CD8-positive, alpha-beta memory T cell (primary cell): ENCODE measurements at regions of chr1 and their contacts with region 1.

Region 1: DNA sequence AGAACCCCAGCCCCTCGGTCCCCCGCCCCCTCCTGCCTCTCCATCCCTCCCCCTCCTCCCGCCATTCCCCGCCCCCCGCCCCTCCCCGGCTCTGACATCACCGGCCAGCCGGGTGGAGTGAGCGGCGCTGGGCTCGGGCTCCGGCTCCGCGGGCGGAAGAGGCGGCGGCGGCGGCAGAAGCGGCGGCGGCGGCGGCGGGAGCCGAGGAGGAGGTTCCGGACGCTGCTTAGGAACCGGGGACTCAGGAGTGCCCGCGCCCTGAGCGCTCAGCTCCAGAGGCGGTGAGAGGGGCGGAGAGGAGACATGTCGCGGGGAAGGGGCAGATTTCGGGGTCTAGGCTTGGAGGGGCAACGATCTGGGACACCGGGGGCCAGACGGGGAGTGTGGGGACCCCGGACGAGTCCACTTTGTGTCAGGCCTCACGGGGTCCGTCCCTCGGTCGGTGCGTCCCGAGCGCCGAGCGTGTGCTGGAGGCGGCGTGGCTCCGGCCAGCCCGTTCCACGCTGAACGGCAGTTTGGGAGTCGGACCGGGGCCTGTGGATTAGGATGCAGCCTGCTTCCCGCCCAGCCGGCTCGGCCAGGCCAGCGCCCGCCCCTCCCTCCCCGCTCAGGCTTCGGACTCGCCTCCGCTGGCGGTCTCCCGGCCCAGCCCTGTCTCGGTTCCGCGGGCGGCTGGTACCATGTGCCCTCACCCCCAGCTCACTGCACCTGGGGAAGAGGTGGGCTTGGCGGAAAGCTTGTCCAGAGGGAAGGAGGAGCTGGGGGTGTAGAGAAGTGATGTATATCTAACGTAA is at the start of gene PEA15:
- DNase-seq: peak; percentile 56 to 76 (median 58)
- H3K4me3 ChIP-seq: peak within 1 kb of the TSS; percentile 71
- H3K4me3 Mint-ChIP-seq: peak within 1 kb of the TSS; percentile 86 to 95 (median 88)
- H3K27ac ChIP-seq: peak within 1 kb of the TSS; percentile 69
- H3K27ac Mint-ChIP-seq: peak within 1 kb of the TSS; percentile 88 to 98 (median 94)
- H3K4me1 ChIP-seq: peaks cover 13% of the 10 kb centered on the region
- H3K4me1 Mint-ChIP-seq: peaks cover 42 to 50% (median 49%) of the 10 kb centered on the region in 3 donors
- H3K27me3 ChIP-seq: no peaks in the 10 kb centered on the region
- H3K27me3 Mint-ChIP-seq: no peaks in the 10 kb centered on the region
- total RNA-seq, gene PEA15: 77.4 to 81.4 TPM

Region 2: DNA sequence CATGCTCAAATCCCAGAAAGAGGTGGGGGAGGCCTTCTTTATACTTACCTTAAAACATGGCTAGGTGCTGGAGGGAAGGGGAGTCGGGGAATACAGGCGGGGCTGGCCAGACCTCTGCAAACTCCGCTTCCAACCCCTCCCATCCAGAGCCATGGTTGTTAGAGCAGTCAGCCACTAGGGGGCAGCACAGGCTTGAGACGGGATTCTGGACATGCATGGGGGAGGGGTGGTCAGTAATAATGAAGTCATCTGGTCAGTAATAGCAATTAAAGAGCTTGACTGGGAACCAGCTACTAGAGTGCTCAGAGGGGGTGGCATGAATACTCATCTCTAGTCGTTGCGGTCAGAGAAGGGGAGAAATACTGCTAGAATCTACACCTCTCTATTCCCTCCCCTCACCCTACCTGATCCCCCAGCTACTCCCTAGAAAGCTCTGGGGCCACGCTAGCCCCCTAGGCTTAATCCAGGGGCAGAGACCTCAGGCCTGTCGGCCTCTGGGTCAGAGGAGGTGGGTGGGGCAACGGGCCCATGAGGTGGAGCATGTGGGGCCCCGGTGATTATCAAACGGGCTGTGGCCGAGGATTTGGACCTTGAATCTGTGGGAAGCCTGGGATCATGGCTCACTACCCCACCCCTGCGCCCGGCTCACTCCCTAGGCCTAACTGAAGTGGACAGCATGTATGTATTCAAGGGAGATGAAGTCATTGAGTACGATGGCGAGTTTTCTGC is 12.2 kb before region 1 on chr1:
- CTCF ChIA-PET with region 1: interaction called, 15 read pairs
- POLR2A ChIA-PET with region 1: no interaction called
- DNase-seq: peak; percentile 58 to 85 (median 76)
- H3K4me3 ChIP-seq: no peak overlapping the region
- H3K4me3 Mint-ChIP-seq: no peak overlapping the region
- H3K27ac ChIP-seq: no peak overlapping the region
- H3K27ac Mint-ChIP-seq: no peak overlapping the region
- H3K4me1 ChIP-seq: peaks cover 3% of the 10 kb centered on the region
- H3K4me1 Mint-ChIP-seq: no peaks in the 10 kb centered on the region
- H3K27me3 ChIP-seq: no peaks in the 10 kb centered on the region
- H3K27me3 Mint-ChIP-seq: peaks cover 2 to 9% of the 10 kb centered on the region in 2 donors